Panc1 (cell line): ENCODE measurements at regions of chr1 and their contacts with region 1.

Region 1: GRCh38 chr1:207454046-207454964 is at the start of gene CR2:
- DNase-seq: no peak
- ATAC-seq: peak; percentile 80
- H3K4me3 ChIP-seq: peak within 1 kb of the TSS; percentile 31 to 43
- H3K27ac ChIP-seq: no peak within 1 kb of the TSS
- H3K4me1 ChIP-seq: no peaks in the 10 kb centered on the region
- H3K27me3 ChIP-seq: peaks cover 49% of the 10 kb centered on the region
- CTCF ChIP-seq: peak; percentile 44
- total RNA-seq, gene CR2: 0.08 TPM

Region 2: GRCh38 chr1:207440626-207441025 is 13.7 kb before region 1 on chr1:
- CTCF ChIA-PET with region 1: interaction called, 11 read pairs
- POLR2A ChIA-PET with region 1: no interaction called
- in situ Hi-C with region 1: no loop called
- intact Hi-C with region 1: no loop called
- DNase-seq: no peak
- ATAC-seq: no peak
- H3K4me3 ChIP-seq: no peak overlapping the region
- H3K27ac ChIP-seq: no peak overlapping the region
- H3K4me1 ChIP-seq: no peaks in the 10 kb centered on the region
- H3K27me3 ChIP-seq: no peaks in the 10 kb centered on the region; the same call in 1 of the 2 replicates
- CTCF ChIP-seq: no peak